Activated CD4-positive, alpha-beta memory T cell treated with anti-CD3 and anti-CD28 coated beads for 36 hours (primary cell): ENCODE measurements at regions of chr5 and their contacts with region 1.

Region 1: GRCh38 chr5:170100066-170100943 is 5.4 kb upstream of the FOXI1 start:
- DNase-seq: peak; percentile 78
- H3K4me3 Mint-ChIP-seq: no peak overlapping the region
- H3K27ac Mint-ChIP-seq: no peak overlapping the region
- H3K4me1 Mint-ChIP-seq: no peaks in the 10 kb centered on the region
- H3K27me3 Mint-ChIP-seq: peaks cover 3% of the 10 kb centered on the region

Region 2: GRCh38 chr5:170183816-170184687 is 83.7 kb after region 1 on chr5:
- CTCF ChIA-PET with region 1: interaction called, 41 read pairs
- POLR2A ChIA-PET with region 1: no interaction called
- intact Hi-C with region 1: loop called (anchors 1 kb)
- DNase-seq: peak; percentile 65
- H3K4me3 Mint-ChIP-seq: no peak overlapping the region
- H3K27ac Mint-ChIP-seq: no peak overlapping the region
- H3K4me1 Mint-ChIP-seq: peaks cover 5% of the 10 kb centered on the region
- H3K27me3 Mint-ChIP-seq: no peaks in the 10 kb centered on the region

Region 3: GRCh38 chr5:170216266-170216864 is 116.1 kb after region 1 on chr5:
- CTCF ChIA-PET with region 1: interaction called, 11 read pairs
- POLR2A ChIA-PET with region 1: no interaction called
- intact Hi-C with region 1: loop called (anchors 5 kb)
- DNase-seq: no peak
- H3K4me3 Mint-ChIP-seq: no peak overlapping the region
- H3K27ac Mint-ChIP-seq: no peak overlapping the region
- H3K4me1 Mint-ChIP-seq: no peaks in the 10 kb centered on the region
- H3K27me3 Mint-ChIP-seq: peaks cover 2% of the 10 kb centered on the region

Region 4: DNA sequence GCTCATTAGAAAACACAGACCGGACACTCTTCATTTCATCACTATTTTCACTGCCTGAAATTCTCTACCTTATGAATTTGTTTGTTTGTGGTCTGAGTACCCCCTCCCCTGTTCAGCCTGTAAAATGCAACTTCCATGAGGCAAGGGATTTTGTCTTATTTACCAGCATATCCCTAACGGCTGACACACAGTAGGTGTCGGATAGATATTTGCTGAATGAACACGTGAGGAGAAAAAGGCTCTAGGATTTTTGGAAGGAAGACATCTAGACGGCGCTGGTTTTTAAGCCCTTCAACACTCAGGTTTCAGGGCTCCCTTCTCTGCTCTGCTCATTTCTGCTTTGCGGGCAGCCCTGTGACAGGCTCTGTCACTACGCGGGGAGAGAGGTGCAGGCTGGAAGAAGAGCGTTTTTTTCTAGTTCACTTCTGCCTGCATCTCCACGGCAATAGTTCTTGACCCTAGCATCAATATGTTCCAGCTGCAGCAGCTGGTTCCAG is 247.9 kb after region 1 on chr5:
- CTCF ChIA-PET with region 1: no interaction called
- POLR2A ChIA-PET with region 1: no interaction called
- intact Hi-C with region 1: no loop called
- DNase-seq: no peak
- H3K4me3 Mint-ChIP-seq: no peak overlapping the region
- H3K27ac Mint-ChIP-seq: no peak overlapping the region
- H3K4me1 Mint-ChIP-seq: no peaks in the 10 kb centered on the region
- H3K27me3 Mint-ChIP-seq: peaks cover 11% of the 10 kb centered on the region

Region 5: DNA sequence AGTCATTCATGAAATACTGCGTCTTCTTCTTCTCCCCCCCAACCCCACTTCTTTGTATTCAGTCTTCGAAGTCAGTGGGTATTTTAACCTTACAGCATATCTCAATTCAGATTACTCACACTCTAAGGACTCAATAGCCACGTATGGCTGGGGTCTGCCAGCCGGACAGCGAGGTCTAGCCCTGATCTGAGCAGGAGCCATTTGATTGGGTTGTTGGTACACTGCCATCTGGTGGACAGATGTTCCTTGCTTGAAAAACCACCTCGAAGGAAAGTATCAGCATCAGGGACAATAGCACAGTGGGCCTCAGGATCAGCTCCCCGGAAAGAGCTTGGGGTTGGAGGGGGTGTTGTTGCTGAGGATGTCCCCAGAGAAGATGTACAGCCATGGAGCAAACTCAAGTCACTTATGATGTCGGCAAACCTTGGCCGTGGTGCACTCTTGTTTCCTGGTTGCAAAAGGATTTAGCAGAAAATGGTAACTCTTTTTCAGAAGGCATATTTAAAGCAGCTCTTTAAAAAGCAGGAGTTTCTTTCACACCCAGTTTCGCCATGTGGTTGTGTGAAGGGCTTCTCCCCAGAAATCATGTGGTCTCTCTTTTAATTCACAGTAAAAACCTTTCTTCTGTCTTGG is 320.6 kb after region 1 on chr5:
- CTCF ChIA-PET with region 1: interaction called, 11 read pairs
- POLR2A ChIA-PET with region 1: no interaction called
- intact Hi-C with region 1: loop called (anchors 2 kb)
- DNase-seq: peak; percentile 52
- H3K4me3 Mint-ChIP-seq: no peak overlapping the region
- H3K27ac Mint-ChIP-seq: no peak overlapping the region
- H3K4me1 Mint-ChIP-seq: peaks cover 14% of the 10 kb centered on the region
- H3K27me3 Mint-ChIP-seq: no peaks in the 10 kb centered on the region

Region 6: DNA sequence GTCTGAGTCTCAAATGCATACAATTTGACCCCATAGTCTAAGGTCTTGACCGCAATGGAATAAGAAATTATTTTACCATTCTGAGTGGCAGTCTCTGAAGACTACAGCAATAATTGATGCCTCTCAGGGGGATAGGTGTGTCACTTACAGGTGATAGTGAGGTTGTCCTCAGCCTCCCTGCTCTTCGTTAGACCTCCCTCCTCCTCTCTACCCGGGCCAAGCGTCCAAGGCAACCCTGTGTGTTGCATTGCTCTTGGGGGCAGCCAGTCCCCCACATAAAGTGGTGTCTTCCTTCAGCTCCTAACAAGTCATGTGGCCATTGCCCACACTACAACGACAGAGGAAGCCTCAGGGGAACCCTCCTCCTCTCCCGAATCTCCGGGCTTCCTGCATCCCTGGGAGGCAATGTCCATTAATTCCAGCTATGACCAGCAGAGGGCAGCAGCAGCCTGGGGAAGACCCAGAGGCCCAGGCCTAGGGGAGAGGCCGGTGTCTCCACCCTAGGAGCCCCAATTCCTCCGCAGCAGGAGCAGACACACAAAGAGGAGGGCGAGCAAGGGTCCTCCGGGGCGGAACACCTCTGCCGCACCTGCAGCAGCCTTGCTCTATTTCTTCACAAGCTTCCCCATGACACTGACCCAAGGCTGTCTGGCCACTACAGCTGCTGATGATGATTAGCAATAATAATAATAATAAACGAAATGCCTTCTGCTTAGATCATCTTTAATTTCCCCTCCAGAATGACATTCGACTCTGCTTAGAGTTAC is 538.3 kb after region 1 on chr5:
- CTCF ChIA-PET with region 1: no interaction called
- POLR2A ChIA-PET with region 1: no interaction called
- intact Hi-C with region 1: loop called (anchors 10 kb)
- DNase-seq: peak; percentile 77
- H3K4me3 Mint-ChIP-seq: no peak overlapping the region
- H3K27ac Mint-ChIP-seq: no peak overlapping the region
- H3K4me1 Mint-ChIP-seq: peaks cover 5% of the 10 kb centered on the region
- H3K27me3 Mint-ChIP-seq: peaks cover 4% of the 10 kb centered on the region